Gastrocnemius medialis (tissue), 4 donors: ENCODE measurements at regions of chr10 and their contacts with region 1.

Region 1: GRCh38 chr10:91374052-91374451 is 36.1 kb upstream of the HECTD2 start:
- DNase-seq: no peak
- ATAC-seq: no peak
- H3K4me3 ChIP-seq: no peak overlapping the region
- H3K27ac ChIP-seq: no peak overlapping the region
- H3K4me1 ChIP-seq: no peaks in the 10 kb centered on the region
- H3K27me3 ChIP-seq: no peaks in the 10 kb centered on the region
- CTCF ChIP-seq: no peak
- POLR2A ChIP-seq: no peak

Region 2: DNA sequence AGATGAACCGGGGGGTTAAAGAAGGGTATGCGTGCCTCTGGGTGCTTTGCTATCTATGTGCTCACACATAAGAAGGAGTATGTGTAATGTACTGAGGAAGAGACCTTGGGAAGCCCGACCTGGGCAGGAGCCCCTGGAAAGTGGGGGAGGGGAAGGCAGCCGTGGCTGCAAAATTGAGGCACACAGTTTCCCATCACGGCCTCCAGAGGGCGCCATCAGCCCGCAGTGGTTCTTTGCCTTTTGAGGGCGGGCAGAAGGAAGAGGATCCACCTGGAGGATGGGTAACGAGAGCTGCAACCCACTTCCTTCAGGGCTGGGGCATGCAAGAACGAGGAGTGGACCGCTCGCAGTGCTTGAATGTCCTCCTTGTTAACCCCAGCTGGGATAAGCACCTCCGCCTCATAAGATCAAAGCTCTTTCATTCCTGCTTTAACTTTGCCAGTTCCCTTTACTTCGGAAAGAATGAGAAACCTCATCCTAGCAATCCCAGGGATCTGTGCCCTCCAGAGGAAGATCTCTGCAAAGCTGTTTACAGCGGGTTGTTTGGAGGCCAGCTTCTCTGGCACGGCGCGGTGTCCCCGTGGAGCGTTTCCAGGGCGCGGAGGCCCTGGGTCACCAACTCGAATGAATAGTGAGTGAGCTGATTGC is 75.7 kb before region 1 on chr10:
- in situ Hi-C with region 1: loop called in 1 of 4 experiments (anchors 5 kb)
- intact Hi-C with region 1: loop called (anchors 1 kb)
- DNase-seq: peak; percentile 57 to 72
- ATAC-seq: peak; percentile 87 to 94
- H3K4me3 ChIP-seq: peak overlapping the region; percentile 29 to 64 (median 38)
- H3K27ac ChIP-seq: peak overlapping the region in 1 of 4 donors; percentile 32
- H3K4me1 ChIP-seq: peaks cover 4 to 5% of the 10 kb centered on the region in 2 donors
- H3K27me3 ChIP-seq: no peaks in the 10 kb centered on the region
- CTCF ChIP-seq: peak; percentile 91 to 98 (median 94)
- POLR2A ChIP-seq: peak in 1 of 2 donors; percentile 3

Region 3: DNA sequence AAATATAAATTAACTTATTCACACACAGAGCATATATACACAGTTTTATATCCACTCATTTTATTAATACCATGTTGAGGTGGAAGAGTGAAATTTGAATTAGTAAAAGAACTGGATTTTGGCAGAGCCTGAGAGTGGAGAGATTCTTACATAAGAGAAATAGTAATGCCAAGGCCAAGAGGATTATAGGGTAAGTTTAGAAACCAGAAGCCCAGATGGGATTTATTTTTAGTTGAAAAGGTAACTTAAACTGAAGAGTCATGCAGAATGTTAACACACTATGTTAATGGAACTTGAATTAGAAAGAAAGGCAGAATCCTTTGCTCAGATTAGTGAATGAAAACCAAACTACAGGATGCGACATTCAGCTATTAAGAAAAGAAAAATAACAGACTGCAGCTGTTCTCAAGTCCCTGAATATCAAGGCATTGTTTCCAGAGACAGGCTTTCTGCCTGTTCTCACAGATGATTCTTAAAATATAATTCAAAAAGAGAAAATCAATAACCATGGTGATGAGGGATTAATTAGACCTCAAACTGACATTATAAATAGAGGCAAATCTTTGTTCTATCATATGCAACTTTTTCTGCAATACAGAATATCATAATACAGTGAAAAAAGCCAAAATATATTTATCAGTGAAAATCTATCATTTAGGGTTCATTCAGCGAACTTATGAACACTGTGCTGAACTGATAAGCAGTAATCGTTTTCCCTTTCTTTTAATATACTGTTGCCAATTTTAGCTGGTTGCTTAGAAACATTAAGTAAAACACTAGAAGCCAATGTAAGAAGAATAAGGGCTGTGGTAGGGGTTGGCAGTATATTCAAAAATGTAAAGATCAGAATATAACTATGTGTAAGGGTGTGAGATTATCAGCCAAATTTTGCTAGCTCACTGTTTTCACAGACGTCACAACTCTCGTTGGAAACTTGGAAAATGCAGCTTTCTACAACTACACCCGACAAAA is 70.4 kb after region 1 on chr10:
- in situ Hi-C with region 1: no loop called
- intact Hi-C with region 1: no loop called
- DNase-seq: no peak
- ATAC-seq: peak; percentile 73 to 92
- H3K4me3 ChIP-seq: peak overlapping the region in 1 of 4 donors; percentile 14
- H3K27ac ChIP-seq: peak overlapping the region in 2 of 4 donors; percentile 32 to 63
- H3K4me1 ChIP-seq: peaks cover 18 to 22% of the 10 kb centered on the region in 2 donors
- H3K27me3 ChIP-seq: no peaks in the 10 kb centered on the region
- CTCF ChIP-seq: no peak
- POLR2A ChIP-seq: no peak